ENCODE measurements at regions of chr1 and their contacts with region 1.

Region 1: DNA sequence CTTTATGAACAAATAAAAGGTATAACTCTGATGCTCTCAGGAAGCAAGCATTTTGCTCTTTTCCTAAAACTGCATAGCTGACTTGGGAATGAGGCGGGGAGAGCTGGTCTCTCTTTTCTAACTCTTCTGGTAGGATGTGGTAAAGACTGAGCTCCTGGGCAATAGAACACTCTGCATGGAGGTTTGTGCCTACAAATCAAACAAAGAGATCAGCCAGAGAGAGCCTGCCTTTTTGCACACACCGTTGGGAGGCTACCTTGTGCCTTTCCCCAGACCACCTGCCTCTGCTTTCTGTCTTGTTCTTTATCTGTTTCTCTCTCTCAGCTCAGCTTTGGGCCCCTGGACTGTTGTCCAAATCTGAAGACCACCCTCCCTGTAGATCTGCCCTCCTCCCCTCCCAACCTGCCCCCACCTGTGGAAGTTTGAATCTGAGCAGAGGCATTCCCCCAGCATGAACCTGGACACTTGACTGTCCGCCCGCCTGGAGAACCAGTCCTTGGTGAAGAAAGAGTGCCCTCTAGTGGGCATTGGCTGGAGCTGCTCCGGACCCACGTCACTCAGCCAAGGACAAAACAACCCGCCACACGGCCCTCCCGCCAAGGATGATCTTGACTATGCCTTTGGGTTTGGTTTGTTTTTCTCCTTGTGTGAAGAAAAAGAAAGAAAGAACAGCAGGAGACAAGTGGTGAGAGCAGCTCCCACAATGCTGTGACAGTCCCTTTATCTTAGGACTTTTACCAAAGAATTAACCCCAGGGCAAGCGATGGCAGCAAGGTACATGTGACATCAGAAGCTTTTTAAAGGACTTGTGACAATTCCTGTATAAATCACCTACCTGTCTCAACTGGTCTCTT is 228.2 kb downstream of the PBX1 start:
- DNase-seq: peak; percentile 45
- ATAC-seq: peak; percentile 99
- H3K4me3 ChIP-seq: no peak overlapping the region
- H3K27ac ChIP-seq: no peak overlapping the region
- H3K4me1 ChIP-seq: no peaks in the 10 kb centered on the region
- H3K27me3 ChIP-seq: peaks cover 0 to 3% of the 10 kb centered on the region in 2 experiments; a peak in 1 of 5 replicates
- CTCF ChIP-seq: peak; percentile 93
- EP300 ChIP-seq: no peak
- POLR2A ChIP-seq: no peak
- RAD21 ChIP-seq: peak; percentile 62

Region 2: DNA sequence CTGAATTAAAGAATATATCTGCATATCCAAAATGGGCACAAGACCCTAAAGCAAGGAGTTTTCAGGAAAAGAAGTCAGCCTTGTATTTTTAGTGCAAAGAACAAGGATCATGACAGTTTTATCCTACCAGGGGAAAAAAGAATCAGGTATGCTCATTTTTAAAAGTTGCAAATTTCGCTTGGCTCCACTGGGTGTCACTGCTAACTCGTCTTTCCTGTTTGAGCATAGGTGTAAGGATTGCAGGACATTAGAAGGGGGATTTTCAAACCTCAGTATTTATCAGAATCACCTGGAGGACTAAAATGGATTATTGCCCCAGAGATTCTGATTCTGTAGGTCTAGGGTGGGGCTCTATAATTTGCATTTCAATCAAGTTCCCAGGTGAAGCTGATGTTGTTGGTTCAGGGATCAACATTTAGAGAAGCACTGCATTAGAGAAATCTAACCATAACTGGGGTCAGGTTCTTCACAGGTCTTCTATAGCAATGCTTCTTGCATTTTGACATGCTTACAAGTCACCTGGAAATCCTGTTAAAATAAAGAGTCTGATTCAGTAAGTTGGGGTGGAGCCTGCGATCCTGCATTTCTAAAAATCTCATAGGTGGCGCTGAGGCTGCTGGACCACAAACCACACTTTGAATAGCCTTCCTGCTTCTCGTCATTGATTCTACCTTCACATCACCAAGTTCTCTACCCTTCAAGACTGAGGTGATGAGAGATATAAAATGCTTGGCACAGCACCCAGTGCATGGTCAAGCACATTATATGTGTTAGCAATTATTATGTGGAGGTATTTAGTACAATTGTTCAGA is 1425.9 kb before region 1 on chr1:
- CTCF ChIA-PET with region 1: no interaction called
- POLR2A ChIA-PET with region 1: no interaction called
- in situ Hi-C with region 1: no loop called
- intact Hi-C with region 1: loop called (anchors 1 kb)
- DNase-seq: peak; percentile 12
- ATAC-seq: peak; percentile 66
- H3K4me3 ChIP-seq: no peak overlapping the region
- H3K27ac ChIP-seq: no peak overlapping the region
- H3K4me1 ChIP-seq: no peaks in the 10 kb centered on the region
- H3K27me3 ChIP-seq: no peaks in the 10 kb centered on the region
- CTCF ChIP-seq: peak; percentile 61
- EP300 ChIP-seq: no peak
- POLR2A ChIP-seq: no peak
- RAD21 ChIP-seq: no peak

Region 3: GRCh38 chr1:163528710-163529348 is 1258.4 kb before region 1 on chr1:
- CTCF ChIA-PET with region 1: no interaction called
- POLR2A ChIA-PET with region 1: no interaction called
- in situ Hi-C with region 1: loop called (anchors 10 kb)
- intact Hi-C with region 1: loop called (anchors 2 kb)
- DNase-seq: peak; percentile 7
- ATAC-seq: peak; percentile 54
- H3K4me3 ChIP-seq: no peak overlapping the region
- H3K27ac ChIP-seq: no peak overlapping the region
- H3K4me1 ChIP-seq: 0 out of 2 replicates have a peak, but pooled peaks cover 5% of the 10 kb centered on the region
- H3K27me3 ChIP-seq: no peaks in the 10 kb centered on the region
- CTCF ChIP-seq: peak; percentile 33; the same call in 1 of the 2 replicates
- EP300 ChIP-seq: no peak
- POLR2A ChIP-seq: no peak
- RAD21 ChIP-seq: no peak

Region 4: DNA sequence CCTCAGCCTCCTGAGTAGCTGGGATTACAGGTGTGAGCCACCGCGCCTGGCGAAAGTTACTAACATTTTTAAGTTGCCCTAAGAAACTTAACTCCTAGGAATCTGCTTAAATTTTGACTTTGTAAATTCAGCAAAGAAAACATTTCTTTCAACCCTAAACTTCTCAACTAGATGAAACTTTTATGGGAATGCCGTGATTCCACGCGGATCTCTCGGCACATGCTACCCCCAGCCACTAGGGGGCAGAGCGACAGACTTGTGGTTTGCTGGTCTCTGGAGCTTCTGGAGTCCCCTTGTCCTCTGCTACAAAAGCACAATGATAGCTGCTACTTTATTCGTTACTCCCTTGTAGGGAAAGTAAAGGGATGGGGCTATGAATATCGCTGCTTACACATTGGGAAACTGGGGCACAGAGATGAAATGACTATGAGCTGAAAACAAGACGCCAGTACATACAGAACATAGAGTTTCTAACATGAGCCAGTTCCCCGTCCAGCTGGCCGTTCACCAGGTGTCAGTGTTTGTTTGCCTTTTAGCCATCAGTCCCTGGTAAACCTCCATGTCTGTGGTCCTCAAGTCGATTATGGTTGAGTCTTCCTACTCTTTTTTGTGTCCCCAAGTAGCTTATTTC is 113.5 kb before region 1 on chr1:
- CTCF ChIA-PET with region 1: interaction called, 7 read pairs
- POLR2A ChIA-PET with region 1: no interaction called
- in situ Hi-C with region 1: loop called (anchors 10 kb)
- intact Hi-C with region 1: loop called (anchors 1 kb)
- DNase-seq: peak; percentile 29
- ATAC-seq: peak; percentile 71
- H3K4me3 ChIP-seq: no peak overlapping the region
- H3K27ac ChIP-seq: no peak overlapping the region
- H3K4me1 ChIP-seq: no peaks in the 10 kb centered on the region
- H3K27me3 ChIP-seq: no peaks in the 10 kb centered on the region
- CTCF ChIP-seq: peak; percentile 68
- EP300 ChIP-seq: no peak
- POLR2A ChIP-seq: no peak
- RAD21 ChIP-seq: no peak

Region 5: GRCh38 chr1:164755695-164756094 is 31.5 kb before region 1 on chr1:
- CTCF ChIA-PET with region 1: no interaction called
- POLR2A ChIA-PET with region 1: no interaction called
- in situ Hi-C with region 1: no loop called
- intact Hi-C with region 1: no loop called
- DNase-seq: no peak
- ATAC-seq: no peak
- H3K4me3 ChIP-seq: no peak overlapping the region
- H3K27ac ChIP-seq: no peak overlapping the region
- H3K4me1 ChIP-seq: no peaks in the 10 kb centered on the region
- H3K27me3 ChIP-seq: no peaks in the 10 kb centered on the region
- CTCF ChIP-seq: no peak
- EP300 ChIP-seq: no peak
- POLR2A ChIP-seq: no peak
- RAD21 ChIP-seq: no peak